Right ventricle myocardium inferior (tissue), 1 donor: ENCODE measurements at regions of chr21 and their contacts with region 1.

Region 1: GRCh38 chr21:24895885-24896734 is 711.2 kb downstream of the MRPL39 start:
- DNase-seq: no peak
- ATAC-seq: no peak

Region 2: GRCh38 chr21:24785033-24785432 is 111.1 kb before region 1 on chr21:
- intact Hi-C with region 1: no loop called
- DNase-seq: no peak
- ATAC-seq: no peak

Region 3: GRCh38 chr21:25313829-25314228 is 417.7 kb after region 1 on chr21:
- intact Hi-C with region 1: loop called (anchors 2 kb)
- DNase-seq: no peak
- ATAC-seq: no peak

Region 4: GRCh38 chr21:25385911-25386474 is 489.9 kb after region 1 on chr21:
- intact Hi-C with region 1: loop called (anchors 5 kb)
- DNase-seq: peak; percentile 30
- ATAC-seq: no peak